ENCODE measurements at regions of chr3 and their contacts with region 1.

Region 1: DNA sequence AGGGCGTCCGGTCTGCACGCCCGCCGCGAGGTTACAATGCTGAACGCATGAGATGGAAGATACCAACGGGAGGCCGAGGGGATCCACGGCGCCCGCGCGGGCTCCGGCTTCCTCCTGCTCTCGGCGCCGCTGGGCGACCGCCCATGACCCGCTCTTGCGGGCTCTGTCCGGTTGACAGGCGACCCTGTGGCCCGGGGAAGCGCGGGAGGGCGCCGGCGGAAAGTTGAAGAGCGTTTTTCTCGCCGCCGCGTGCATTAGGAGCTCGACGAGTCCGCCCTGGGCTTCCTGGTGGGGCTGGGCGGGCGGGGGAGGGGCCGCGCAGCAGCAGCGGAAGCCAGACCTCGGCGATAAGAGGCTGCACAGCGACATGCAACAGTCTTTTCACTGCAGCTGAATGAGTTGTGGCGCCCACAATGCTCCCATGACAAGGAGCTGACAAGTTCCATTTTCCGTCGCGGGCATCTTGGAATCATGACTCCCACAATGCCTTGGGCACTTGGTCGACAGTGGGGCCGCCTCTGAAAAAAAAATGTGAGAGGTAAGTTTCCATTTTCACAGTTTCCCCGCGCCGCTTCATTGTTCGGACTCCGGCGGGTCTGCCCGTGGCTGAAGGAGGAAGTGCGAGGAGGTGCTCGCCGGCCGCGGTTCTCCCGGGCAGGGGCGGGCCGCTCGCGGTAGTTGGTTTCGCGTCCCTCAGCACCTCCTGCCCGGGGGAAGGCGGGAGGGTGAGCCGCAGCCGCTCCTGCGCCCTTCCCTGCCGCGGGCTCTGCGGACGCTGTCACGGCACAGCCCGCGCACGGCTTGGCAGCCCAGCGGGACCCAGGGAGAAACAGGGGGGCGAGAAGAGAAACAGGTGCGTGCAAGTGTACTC is at the start of gene MBNL1:
- DNase-seq: peak; percentile 79
- ATAC-seq: peak; percentile 73
- H3K4me3 Mint-ChIP-seq: peak within 1 kb of the TSS; percentile 98
- H3K27ac Mint-ChIP-seq: peak within 1 kb of the TSS; percentile 98
- H3K4me1 Mint-ChIP-seq: peaks cover 68% of the 10 kb centered on the region
- H3K27me3 Mint-ChIP-seq: no peaks in the 10 kb centered on the region
- CTCF ChIP-seq: no peak
- total RNA-seq, gene MBNL1: 489 and 561 TPM in 2 replicates

Region 2: DNA sequence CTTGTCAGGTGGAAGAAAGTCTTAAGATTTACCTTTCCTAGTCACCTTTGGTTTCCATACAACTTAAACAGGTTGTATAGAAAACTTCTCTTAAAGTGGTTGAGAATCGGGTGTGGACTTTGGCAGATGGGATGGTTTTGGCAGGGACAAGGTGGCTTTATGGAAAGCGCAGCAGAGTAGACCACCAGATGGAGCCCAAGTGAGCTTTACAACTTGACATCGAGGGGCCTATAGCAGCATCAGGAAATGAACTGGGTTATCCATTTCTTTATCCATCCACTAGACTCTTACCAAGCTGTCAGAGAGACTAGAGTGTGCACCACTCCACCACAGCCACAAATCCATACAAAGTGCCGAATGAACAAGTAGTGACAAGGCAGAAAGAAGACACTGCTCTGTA is 85.3 kb before region 1 on chr3:
- CTCF ChIA-PET with region 1: interaction called, 24 read pairs
- POLR2A ChIA-PET with region 1: interaction called, 50 read pairs
- intact Hi-C with region 1: loop called (anchors 1 kb)
- DNase-seq: peak; percentile 20
- ATAC-seq: peak; percentile 87
- H3K4me3 Mint-ChIP-seq: peak overlapping the region; percentile 5
- H3K27ac Mint-ChIP-seq: no peak overlapping the region
- H3K4me1 Mint-ChIP-seq: peaks cover 30% of the 10 kb centered on the region
- H3K27me3 Mint-ChIP-seq: no peaks in the 10 kb centered on the region
- CTCF ChIP-seq: no peak

Region 3: DNA sequence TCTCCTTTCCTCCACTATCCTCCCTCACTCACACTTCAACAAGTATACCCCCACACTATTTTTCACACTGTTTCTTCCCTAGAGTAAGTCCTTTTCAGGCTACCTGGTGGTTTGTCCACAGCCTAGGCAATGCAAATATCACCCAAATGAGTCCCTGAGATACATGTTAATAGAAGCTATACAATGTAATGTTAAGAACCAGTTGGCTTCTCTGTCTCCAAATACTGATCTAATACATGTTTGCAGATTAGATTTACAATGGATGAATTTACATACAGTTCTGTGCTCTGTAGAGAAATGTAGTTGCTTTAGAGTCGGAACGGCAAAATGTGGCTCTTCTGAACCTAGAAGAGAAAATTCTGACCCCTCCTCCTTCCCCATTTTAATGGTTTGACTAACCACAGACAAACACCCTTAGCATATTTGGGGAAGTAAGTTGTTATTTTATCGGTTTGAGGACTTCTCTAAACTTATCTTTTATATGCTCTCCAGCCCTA is 63.6 kb before region 1 on chr3:
- CTCF ChIA-PET with region 1: interaction called, 4 read pairs
- POLR2A ChIA-PET with region 1: interaction called, 185 read pairs
- intact Hi-C with region 1: no loop called
- DNase-seq: no peak
- ATAC-seq: peak; percentile 72
- H3K4me3 Mint-ChIP-seq: peak overlapping the region; percentile 95
- H3K27ac Mint-ChIP-seq: peak overlapping the region; percentile 99
- H3K4me1 Mint-ChIP-seq: peaks cover 58% of the 10 kb centered on the region
- H3K27me3 Mint-ChIP-seq: no peaks in the 10 kb centered on the region
- CTCF ChIP-seq: no peak

Region 4: GRCh38 chr3:152241142-152242017 is 27.4 kb before region 1 on chr3:
- CTCF ChIA-PET with region 1: interaction called, 10 read pairs
- POLR2A ChIA-PET with region 1: interaction called, 117 read pairs
- intact Hi-C with region 1: loop called (anchors 1 kb)
- DNase-seq: no peak
- ATAC-seq: no peak
- H3K4me3 Mint-ChIP-seq: peak overlapping the region; percentile 62
- H3K27ac Mint-ChIP-seq: peak overlapping the region; percentile 90
- H3K4me1 Mint-ChIP-seq: peaks cover 77% of the 10 kb centered on the region
- H3K27me3 Mint-ChIP-seq: no peaks in the 10 kb centered on the region
- CTCF ChIP-seq: no peak

Region 5: DNA sequence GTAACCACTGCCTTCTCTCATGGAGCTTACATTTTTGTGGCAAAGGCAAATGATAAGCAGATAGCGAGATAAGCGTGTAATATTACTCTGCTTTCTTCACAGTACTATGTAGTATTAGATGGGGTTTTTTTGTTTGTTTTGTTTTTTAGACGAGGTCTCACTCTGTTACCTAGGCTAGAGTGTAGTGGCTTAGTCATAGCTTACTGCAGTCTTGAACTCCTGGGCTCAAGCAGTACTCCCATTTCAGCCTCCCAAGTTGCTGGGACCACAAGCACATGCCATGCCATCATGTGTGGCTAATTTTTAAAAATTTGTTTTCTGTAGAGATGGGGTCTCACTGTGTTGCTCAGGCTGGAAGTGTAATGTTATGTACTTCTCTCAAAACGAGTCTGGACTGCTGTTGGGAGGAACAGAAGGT is 22.9 kb after region 1 on chr3:
- CTCF ChIA-PET with region 1: no interaction called
- POLR2A ChIA-PET with region 1: interaction called, 19 read pairs
- intact Hi-C with region 1: no loop called
- DNase-seq: no peak
- ATAC-seq: peak; percentile 50
- H3K4me3 Mint-ChIP-seq: peak overlapping the region; percentile 5
- H3K27ac Mint-ChIP-seq: peak overlapping the region; percentile 68
- H3K4me1 Mint-ChIP-seq: peaks cover 85% of the 10 kb centered on the region
- H3K27me3 Mint-ChIP-seq: no peaks in the 10 kb centered on the region
- CTCF ChIP-seq: no peak

Region 6: GRCh38 chr3:152444029-152444641 is 175.3 kb after region 1 on chr3:
- CTCF ChIA-PET with region 1: interaction called, 4 read pairs
- POLR2A ChIA-PET with region 1: interaction called, 10 read pairs
- intact Hi-C with region 1: loop called (anchors 5 kb)
- DNase-seq: no peak
- ATAC-seq: peak; percentile 37
- H3K4me3 Mint-ChIP-seq: no peak overlapping the region
- H3K27ac Mint-ChIP-seq: no peak overlapping the region
- H3K4me1 Mint-ChIP-seq: peaks cover 57% of the 10 kb centered on the region
- H3K27me3 Mint-ChIP-seq: no peaks in the 10 kb centered on the region
- CTCF ChIP-seq: no peak